HEK293T (cell line): ENCODE measurements at regions of chr17 and their contacts with region 1.

Region 1: DNA sequence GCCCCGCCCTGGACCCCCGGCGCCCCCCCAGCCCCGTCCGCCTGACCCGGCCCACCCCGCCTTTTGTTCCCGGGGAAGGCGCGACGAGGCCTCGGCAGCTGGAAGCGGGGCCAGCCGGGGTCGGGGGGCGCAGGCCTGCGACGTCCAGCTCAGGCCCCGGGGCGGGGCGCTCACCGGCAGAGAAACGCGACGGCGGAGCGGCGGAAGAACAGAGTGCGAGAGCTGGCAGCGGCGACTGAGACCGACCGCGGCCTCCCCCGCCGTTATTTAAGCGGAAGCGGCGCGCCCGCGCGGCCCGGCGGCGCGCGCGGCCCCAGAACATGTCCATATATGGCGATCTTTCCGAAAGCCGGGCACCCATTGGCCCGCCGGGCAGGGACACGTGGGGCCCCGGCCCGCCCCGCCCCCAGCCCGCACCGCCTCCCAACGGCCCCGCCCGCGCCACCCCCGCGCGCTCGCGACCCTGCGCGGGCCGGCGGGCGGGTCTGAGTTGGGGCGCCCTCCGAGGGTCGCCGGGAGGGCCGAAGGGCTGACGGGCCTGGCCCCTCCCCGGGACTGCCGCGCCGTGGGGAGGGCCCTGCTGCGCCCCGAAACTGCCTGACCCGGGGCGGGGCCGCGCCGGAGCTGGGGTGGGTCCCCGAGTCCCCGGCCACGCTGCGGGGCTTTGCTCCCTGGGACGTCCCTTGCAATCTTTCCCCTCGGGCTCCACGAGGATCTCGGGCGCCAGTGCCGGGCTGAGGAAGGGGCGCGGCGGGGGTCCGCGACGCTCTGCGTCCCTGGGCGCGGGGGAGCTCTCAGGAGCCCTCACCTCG is at the start of gene ACTG1:
- DNase-seq: peak; percentile 96

Region 2: DNA sequence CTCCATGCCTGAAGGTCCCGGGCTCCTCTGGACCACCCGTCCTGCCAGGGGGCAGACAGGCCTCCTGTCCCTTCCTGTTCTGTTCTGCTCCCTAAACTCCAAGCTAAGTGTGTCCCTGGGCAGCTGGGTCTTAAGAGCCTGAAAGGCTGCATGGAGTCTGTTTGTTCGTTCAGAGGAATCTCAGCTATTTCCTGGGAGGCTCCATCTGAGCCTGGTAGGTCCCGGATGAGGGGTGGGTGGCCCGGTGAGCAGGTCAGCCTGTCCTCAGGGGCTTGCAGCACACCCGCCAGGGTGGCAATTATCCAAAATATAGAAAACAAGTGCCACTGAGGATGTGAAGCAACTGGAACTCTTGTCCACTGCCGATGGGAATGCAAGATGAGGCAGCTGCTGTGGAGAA is 12.7 kb before region 1 on chr17:
- CTCF ChIA-PET with region 1: interaction called, 3 read pairs
- POLR2A ChIA-PET with region 1: interaction called, 10 read pairs
- DNase-seq: no peak

Region 3: GRCh38 chr17:81553018-81553615 is 40.4 kb after region 1 on chr17:
- CTCF ChIA-PET with region 1: no interaction called
- POLR2A ChIA-PET with region 1: interaction called, 16 read pairs
- DNase-seq: peak; percentile 79

Region 4: GRCh38 chr17:81582341-81582740 is 69.6 kb after region 1 on chr17:
- CTCF ChIA-PET with region 1: no interaction called
- POLR2A ChIA-PET with region 1: no interaction called
- DNase-seq: no peak